Activated CD4-positive, alpha-beta T cell treated with anti-CD3 and anti-CD28 coated beads, Interleukin-2, amount 10 ng/mL, durations not matched to agents 24 days and 14 days (primary cell): ENCODE measurements at regions of chr3 and their contacts with region 1.

Region 1: GRCh38 chr3:16842272-16843270 is 42.2 kb upstream of the PLCL2 start:
- DNase-seq: peak; percentile 92
- H3K4me3 Mint-ChIP-seq: peak overlapping the region; percentile 82
- H3K27ac Mint-ChIP-seq: peak overlapping the region; percentile 99
- H3K4me1 Mint-ChIP-seq: peaks cover 60% of the 10 kb centered on the region
- H3K27me3 Mint-ChIP-seq: no peaks in the 10 kb centered on the region

Region 2: DNA sequence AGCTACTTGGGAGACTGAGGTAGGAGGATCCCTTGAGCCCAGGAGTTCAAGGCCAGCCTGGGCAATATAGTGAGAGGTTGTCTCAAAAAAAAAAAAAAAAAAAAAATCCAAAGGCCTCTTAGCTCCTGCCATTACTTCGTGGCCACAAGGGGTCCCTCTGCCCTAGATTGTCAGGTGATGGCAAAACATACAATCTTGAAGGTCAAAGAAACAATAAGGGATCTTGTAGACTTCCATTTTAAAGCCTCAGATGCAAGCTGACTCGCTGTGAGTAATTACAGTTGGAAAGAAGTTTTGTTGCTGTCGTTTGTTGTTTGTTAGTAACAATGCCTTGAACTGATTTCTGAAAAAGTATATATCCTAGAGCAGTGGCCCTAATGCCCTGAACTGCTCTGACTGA is 13.8 kb before region 1 on chr3:
- intact Hi-C with region 1: loop called (anchors 2 kb)
- DNase-seq: peak; percentile 84
- H3K4me3 Mint-ChIP-seq: no peak overlapping the region
- H3K27ac Mint-ChIP-seq: no peak overlapping the region
- H3K4me1 Mint-ChIP-seq: peaks cover 16% of the 10 kb centered on the region
- H3K27me3 Mint-ChIP-seq: peaks cover 9% of the 10 kb centered on the region

Region 3: GRCh38 chr3:16906682-16907081 is 64.1 kb after region 1 on chr3:
- intact Hi-C with region 1: loop called (anchors 1 kb)
- DNase-seq: peak; percentile 75
- H3K4me3 Mint-ChIP-seq: peak overlapping the region; percentile 38
- H3K27ac Mint-ChIP-seq: no peak overlapping the region
- H3K4me1 Mint-ChIP-seq: peaks cover 61% of the 10 kb centered on the region
- H3K27me3 Mint-ChIP-seq: no peaks in the 10 kb centered on the region

Region 4: DNA sequence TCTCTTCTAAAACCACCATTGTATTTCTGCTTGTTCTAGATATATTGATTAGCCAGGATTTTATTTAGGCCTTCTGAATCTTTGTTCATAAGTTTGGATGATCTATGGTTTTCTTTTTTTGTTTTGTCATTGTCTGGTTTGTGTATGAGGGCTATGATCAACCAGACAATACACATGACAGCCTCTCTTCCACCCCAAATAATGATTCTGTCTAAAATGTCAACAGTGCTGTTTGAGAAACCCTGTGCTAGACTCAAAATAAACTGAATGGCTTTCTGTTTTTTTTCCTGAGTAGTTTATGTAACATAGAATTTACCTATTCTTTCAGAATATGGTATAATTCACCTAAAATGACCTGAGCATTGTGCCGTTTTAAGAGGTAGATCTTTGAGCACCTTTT is 108.3 kb after region 1 on chr3:
- intact Hi-C with region 1: no loop called
- DNase-seq: no peak
- H3K4me3 Mint-ChIP-seq: no peak overlapping the region
- H3K27ac Mint-ChIP-seq: no peak overlapping the region
- H3K4me1 Mint-ChIP-seq: peaks cover 15% of the 10 kb centered on the region
- H3K27me3 Mint-ChIP-seq: no peaks in the 10 kb centered on the region

Region 5: DNA sequence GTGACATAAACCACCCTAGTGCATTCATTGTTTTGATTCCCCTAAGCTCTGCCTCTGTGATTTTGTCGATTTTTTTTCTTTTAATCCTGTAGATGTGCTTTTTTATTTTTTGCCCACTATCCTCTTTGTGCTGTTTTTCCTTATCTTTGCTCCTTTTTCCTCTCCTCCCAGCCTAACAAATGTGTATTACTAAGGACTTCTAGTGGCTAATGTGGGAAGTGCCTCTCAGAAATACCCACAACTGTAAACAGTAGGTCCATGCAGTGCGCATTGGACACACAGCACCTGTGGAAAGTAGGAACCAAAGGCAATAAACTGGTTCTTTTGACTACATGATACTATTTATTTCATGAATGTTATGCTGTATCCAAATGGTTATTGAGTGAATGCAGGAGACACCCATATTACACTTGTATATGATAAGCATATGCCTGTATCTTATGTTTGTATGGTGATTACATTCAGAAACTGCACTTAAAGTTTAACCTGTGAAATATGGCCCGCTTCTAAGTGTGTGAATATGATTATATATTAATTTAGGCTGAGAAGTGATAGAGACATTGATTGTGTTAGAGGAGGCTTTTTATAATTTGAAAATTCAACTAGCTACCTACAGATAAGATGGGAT is 189.9 kb after region 1 on chr3:
- intact Hi-C with region 1: loop called (anchors 5 kb)
- DNase-seq: peak; percentile 55
- H3K4me3 Mint-ChIP-seq: peak overlapping the region; percentile 1
- H3K27ac Mint-ChIP-seq: peak overlapping the region; percentile 46
- H3K4me1 Mint-ChIP-seq: peaks cover 61% of the 10 kb centered on the region
- H3K27me3 Mint-ChIP-seq: no peaks in the 10 kb centered on the region

Region 6: DNA sequence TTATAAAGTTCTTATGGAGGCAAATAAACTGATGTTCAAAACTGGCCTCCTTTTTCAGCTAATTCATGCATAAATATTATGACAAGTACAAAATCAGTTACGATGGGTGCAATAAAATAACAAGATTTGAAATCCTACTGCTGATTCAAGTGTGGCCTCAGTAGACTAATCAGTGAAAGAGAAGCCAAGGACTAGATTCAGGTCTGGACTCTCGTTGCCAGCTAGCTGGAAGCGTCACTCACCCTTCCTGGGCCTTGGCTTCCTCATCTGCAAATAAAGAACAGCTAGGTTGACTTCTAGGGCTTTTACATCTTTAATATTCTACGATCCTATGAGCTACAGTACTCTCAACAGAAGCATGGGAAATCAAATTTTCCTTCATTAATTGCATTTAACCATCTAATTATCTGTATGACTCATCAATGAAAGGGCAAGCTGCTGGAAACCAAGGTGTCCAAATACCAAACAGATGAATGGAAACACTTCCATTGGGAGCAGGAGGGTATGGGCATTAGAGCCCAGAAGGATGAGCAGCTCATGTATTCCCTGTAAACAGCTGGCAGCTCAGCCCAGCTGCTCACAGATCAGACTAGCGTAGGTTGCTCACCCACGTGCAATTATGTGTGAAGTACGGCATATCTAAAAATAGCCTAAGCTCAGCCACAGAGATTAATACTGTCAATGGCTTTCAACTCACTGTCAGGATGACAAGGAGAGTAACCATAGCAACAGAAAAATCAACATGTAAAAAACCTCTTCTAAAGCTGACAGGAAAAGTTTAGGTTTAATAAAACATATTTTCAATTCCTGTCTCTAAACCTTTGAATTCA is 337.0 kb after region 1 on chr3:
- intact Hi-C with region 1: loop called (anchors 5 kb)
- DNase-seq: peak; percentile 50
- H3K4me3 Mint-ChIP-seq: no peak overlapping the region
- H3K27ac Mint-ChIP-seq: no peak overlapping the region
- H3K4me1 Mint-ChIP-seq: peaks cover 27% of the 10 kb centered on the region
- H3K27me3 Mint-ChIP-seq: peaks cover 1% of the 10 kb centered on the region

Region 7: DNA sequence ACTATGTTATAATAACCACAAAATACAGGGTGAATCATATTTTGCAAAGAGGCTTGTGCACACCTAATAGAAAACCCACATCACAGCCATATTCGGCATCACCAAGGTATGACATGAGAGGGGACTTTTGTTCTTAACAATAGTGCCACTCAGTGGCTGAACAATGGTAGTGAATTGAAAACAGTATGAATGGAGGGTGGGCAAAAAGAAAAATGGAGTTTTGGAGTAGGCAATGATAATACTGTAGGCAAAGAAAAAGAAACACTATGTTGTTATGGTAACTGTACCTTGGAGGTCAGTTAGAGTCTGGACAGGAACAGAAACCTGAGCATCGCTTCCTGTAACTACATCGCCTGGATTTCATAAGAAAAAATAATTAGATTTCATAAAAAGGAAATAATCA is 390.8 kb after region 1 on chr3:
- intact Hi-C with region 1: loop called (anchors 5 kb)
- DNase-seq: peak; percentile 84
- H3K4me3 Mint-ChIP-seq: no peak overlapping the region
- H3K27ac Mint-ChIP-seq: no peak overlapping the region
- H3K4me1 Mint-ChIP-seq: peaks cover 12% of the 10 kb centered on the region
- H3K27me3 Mint-ChIP-seq: no peaks in the 10 kb centered on the region